Mammary epithelial cell (primary cell): ENCODE measurements at regions of chr1 and their contacts with region 1.

Region 1: DNA sequence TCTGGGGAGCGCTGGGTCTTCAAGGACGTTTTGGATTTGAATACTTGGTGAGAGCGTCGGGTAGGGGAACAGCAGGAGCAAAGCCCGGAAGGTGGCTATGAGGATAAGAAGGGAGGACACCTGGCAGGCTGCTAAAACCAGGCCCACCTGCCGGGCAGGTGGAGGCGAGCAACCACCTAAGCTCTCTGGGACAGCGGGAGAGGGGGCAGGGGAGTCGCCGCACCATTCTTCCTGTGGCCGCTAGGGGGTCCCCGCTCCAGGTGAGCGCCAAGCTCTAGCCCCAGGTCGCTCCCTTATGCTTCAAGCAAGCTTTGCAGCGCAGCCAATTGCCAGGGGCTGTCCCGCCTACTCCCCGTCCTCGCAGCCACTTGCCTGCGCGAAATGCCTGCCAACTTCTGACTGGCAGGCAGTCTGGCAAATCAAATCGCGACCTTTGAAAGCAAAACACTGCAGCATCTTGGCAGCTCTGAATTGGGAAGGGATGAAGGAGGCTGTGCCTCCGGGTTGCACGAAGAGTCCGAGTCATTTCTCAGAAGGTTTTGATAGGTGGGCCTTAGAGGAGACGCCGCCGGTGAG is at the start of gene NIPAL3:
- DNase-seq: peak; percentile 100
- H3K4me3 ChIP-seq: peak within 1 kb of the TSS; percentile 74 to 79 (median 75)
- H3K27ac ChIP-seq: peak within 1 kb of the TSS; percentile 94
- H3K4me1 ChIP-seq: peaks cover 65% of the 10 kb centered on the region
- H3K27me3 ChIP-seq: no peaks in the 10 kb centered on the region
- CTCF ChIP-seq: peak; percentile 83 to 89
- total RNA-seq, gene NIPAL3: 48.9 to 116 TPM

Region 2: GRCh38 chr1:24502709-24503058 is 87.3 kb after region 1 on chr1 and contains the start of gene RCAN3:
- CTCF ChIA-PET with region 1: no interaction called
- dilution Hi-C with region 1: no loop called
- in situ Hi-C with region 1: no loop called
- intact Hi-C with region 1: loop called (anchors 2 kb)
- DNase-seq: peak; percentile 88
- H3K4me3 ChIP-seq: peak within 1 kb of the TSS; percentile 81 to 97 (median 94)
- H3K27ac ChIP-seq: peak within 1 kb of the TSS; percentile 84
- H3K4me1 ChIP-seq: peaks cover 11% of the 10 kb centered on the region
- H3K27me3 ChIP-seq: no peaks in the 10 kb centered on the region
- CTCF ChIP-seq: no peak
- total RNA-seq, gene RCAN3: 21.0 to 34.8 TPM

Region 3: DNA sequence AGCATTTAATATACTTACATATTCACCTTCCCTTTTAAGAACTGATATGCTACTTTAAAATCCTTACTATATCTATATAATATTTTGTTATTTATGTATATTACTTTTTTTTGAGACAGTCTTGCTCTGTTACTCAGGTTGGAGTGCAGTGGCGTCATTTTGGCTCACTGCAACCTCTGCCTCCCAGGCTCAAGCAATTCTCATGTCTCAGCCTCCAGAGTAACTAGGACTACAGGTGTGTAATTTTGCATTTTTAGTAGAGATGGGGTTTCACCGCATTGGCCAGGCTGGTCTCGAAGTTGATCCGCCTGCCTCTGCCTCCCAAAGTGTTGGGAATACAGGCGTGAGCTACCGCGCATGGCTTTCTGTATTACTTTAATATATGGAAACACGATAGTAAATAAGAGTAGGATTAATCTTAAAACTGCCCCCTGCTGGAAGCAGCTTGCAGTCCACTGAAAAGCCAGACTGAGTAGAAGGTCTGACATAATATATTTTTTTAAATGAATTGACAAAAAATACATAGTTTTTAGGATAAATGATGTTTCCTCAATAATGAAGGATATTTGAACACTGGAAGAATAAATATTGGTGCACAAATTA is 111.6 kb after region 1 on chr1:
- CTCF ChIA-PET with region 1: no interaction called
- dilution Hi-C with region 1: no loop called
- in situ Hi-C with region 1: no loop called
- intact Hi-C with region 1: loop called (anchors 1 kb)
- DNase-seq: no peak
- H3K4me3 ChIP-seq: no peak overlapping the region
- H3K27ac ChIP-seq: no peak overlapping the region
- H3K4me1 ChIP-seq: no peaks in the 10 kb centered on the region
- H3K27me3 ChIP-seq: no peaks in the 10 kb centered on the region
- CTCF ChIP-seq: peak; percentile 58 to 71

Region 4: DNA sequence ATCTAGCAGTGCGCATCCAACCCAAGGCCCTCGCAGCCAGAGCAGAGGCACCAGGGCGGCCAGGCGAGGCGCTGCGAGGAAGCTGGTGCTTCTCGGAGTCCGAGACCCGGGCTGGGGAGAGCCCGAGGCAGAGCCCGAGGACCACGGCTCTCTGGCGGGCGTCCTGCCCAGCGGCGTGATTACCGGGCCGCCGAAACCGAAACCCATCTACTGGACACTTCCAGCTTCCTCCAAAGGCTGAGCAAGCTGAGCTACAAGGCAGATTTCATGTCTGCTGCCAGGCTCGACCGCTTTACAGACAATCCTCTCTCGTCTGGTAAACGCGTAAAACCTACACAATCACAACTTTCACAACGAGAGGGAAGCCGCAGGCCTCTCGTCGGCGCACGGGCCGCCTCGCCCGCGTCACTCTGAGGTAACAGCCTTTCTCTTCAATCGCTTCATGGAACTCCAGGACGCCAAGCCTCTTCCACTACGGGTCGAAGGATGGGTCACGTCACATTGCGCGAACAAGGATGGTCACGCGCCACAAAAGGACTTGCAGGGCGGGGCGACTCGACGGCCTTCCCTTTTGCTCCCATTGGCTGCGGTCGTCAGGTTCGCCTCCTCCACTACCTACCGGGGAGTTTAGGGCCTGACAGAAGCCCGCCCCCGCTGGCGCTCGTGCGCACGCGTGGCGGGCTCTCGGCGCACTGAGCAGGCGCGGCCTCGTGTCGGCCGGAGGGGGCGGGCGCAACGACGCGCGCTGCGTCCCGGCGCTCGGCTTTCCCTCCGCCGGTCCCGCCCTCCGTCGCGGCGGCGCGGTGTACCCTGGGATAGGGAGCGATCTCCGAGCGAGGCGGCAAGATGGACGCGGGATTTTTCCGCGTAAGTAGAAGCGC is 227.3 kb after region 1 on chr1 and contains the start of gene SRRM1:
- CTCF ChIA-PET with region 1: no interaction called
- dilution Hi-C with region 1: no loop called
- in situ Hi-C with region 1: loop called in 1 of 2 experiments (anchors 25 kb)
- intact Hi-C with region 1: loop called (anchors 2 kb)
- DNase-seq: peak; percentile 100
- H3K4me3 ChIP-seq: peak within 1 kb of the TSS; percentile 74 to 99 (median 95)
- H3K27ac ChIP-seq: peak within 1 kb of the TSS; percentile 98
- H3K4me1 ChIP-seq: peaks cover 17% of the 10 kb centered on the region
- H3K27me3 ChIP-seq: no peaks in the 10 kb centered on the region
- CTCF ChIP-seq: peak in 1 of 2 donors; percentile 33
- total RNA-seq, gene SRRM1: 56.0 to 146 TPM